A549 (cell line): ENCODE measurements at regions of chr4 and their contacts with region 1.

Region 1: GRCh38 chr4:38179690-38180377 is 219.6 kb downstream of the PTTG2 start:
- DNase-seq: peak in 1 of 2 experiments; percentile 55
- ATAC-seq: peak; percentile 74 to 89; a peak in 5 of 6 replicates
- H3K4me3 ChIP-seq: no peak overlapping the region
- H3K27ac ChIP-seq: peak overlapping the region in 1 of 2 experiments; percentile 76; a peak in 3 of 6 replicates
- H3K4me1 ChIP-seq: peaks cover 11% of the 10 kb centered on the region; the same call in 2 of the 3 replicates
- CTCF ChIP-seq: peak; percentile 92
- EP300 ChIP-seq: no peak
- POLR2A ChIP-seq: no peak
- RAD21 ChIP-seq: peak; percentile 96 to 97

Region 2: DNA sequence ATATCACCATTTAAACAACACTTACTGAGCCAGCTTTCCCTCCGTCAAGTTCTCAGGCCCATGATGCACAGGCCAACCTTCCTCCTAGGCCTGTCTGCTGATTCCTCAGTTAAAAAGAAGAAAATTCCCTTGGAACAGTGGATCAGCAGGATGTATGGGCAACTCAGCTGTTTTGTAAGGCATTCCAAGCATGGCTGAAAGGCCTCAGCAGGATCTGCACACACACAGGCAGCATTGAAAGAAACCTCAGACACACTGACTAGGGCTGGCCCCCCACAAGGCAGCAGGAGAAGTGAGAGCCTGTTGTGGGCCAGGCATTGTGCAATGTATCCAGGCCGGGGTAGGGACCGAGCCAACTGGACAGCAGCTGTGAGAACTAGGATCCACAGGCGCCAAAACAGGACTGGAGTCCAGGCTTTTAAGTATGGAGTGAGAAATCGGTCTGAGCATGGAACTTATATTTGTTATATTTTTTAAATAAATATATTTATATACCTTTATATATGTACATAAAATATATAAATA is 763.9 kb before region 1 on chr4:
- CTCF ChIA-PET with region 1: no interaction called
- POLR2A ChIA-PET with region 1: no interaction called
- DNase-seq: no peak
- ATAC-seq: no peak
- H3K4me3 ChIP-seq: no peak overlapping the region
- H3K27ac ChIP-seq: no peak overlapping the region
- H3K4me1 ChIP-seq: no peaks in the 10 kb centered on the region
- CTCF ChIP-seq: no peak
- EP300 ChIP-seq: no peak
- POLR2A ChIP-seq: no peak
- RAD21 ChIP-seq: no peak

Region 3: GRCh38 chr4:38160487-38161207 is 19.2 kb before region 1 on chr4:
- CTCF ChIA-PET with region 1: interaction called, 15 read pairs
- POLR2A ChIA-PET with region 1: no interaction called
- DNase-seq: peak; percentile 60 to 86
- ATAC-seq: peak; percentile 77 to 80
- H3K4me3 ChIP-seq: no peak overlapping the region
- H3K27ac ChIP-seq: peak overlapping the region; percentile 83 to 90
- H3K4me1 ChIP-seq: peaks cover 60% of the 10 kb centered on the region
- CTCF ChIP-seq: no peak
- EP300 ChIP-seq: peak in 1 of 2 experiments; percentile 42; a peak in 1 of 5 replicates
- POLR2A ChIP-seq: no peak
- RAD21 ChIP-seq: no peak

Region 4: GRCh38 chr4:38195911-38196310 is 16.1 kb after region 1 on chr4:
- CTCF ChIA-PET with region 1: interaction called, 15 read pairs
- POLR2A ChIA-PET with region 1: no interaction called
- DNase-seq: no peak
- ATAC-seq: no peak
- H3K4me3 ChIP-seq: no peak overlapping the region
- H3K27ac ChIP-seq: no peak overlapping the region
- H3K4me1 ChIP-seq: peaks cover 1% of the 10 kb centered on the region; the same call in 2 of the 3 replicates
- CTCF ChIP-seq: no peak
- EP300 ChIP-seq: no peak
- POLR2A ChIP-seq: no peak
- RAD21 ChIP-seq: no peak

Region 5: DNA sequence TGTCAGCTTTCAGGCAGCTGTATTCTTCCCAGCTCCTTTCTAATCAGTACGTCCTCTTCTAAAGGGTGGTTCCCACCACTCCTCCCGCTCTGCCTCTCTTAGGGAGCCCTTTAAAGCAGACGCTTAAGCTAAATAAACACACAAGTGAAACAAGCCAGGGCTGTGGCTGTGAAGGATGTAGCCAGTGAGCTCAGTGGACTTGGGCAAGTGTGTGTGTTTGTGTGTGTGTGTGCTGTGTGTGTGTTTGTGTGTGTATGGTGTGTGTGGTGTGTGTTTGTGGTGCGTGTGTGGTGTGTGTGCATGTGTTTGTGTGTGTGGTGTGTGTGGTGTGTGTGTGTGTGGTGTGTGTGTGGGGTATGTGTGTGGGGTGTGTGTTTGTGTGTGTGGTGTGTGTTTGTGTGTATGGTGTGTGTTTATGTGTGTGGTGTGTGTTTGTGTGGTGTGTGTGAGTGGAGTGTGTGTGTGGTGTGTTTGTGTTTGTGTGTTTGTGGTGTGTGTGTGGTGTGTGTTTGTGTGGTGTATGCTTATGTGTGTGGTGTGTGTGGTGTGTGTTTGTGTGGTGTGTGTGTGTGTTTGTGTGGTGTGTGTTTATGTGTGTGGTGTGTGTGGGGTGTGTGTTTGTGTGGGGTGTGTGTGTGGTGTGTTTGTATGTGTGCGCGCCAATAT is 63.7 kb after region 1 on chr4:
- CTCF ChIA-PET with region 1: no interaction called
- POLR2A ChIA-PET with region 1: no interaction called
- DNase-seq: no peak
- ATAC-seq: no peak
- H3K4me3 ChIP-seq: no peak overlapping the region
- H3K27ac ChIP-seq: no peak overlapping the region
- H3K4me1 ChIP-seq: no peaks in the 10 kb centered on the region
- CTCF ChIP-seq: no peak
- EP300 ChIP-seq: no peak
- POLR2A ChIP-seq: no peak
- RAD21 ChIP-seq: no peak

Region 6: GRCh38 chr4:38675146-38676121 is 495.6 kb after region 1 on chr4:
- CTCF ChIA-PET with region 1: interaction called, 46 read pairs
- POLR2A ChIA-PET with region 1: no interaction called
- DNase-seq: peak; percentile 36 to 73
- ATAC-seq: peak; percentile 57 to 66; a peak in 5 of 6 replicates
- H3K4me3 ChIP-seq: peak overlapping the region; percentile 2; the same call in 1 of the 3 replicates
- H3K27ac ChIP-seq: peak overlapping the region; percentile 77 to 91
- H3K4me1 ChIP-seq: peaks cover 58% of the 10 kb centered on the region
- CTCF ChIP-seq: peak; percentile 84
- EP300 ChIP-seq: no peak
- POLR2A ChIP-seq: no peak
- RAD21 ChIP-seq: peak; percentile 88 to 91

Region 7: GRCh38 chr4:38743866-38744265 is 564.0 kb after region 1 on chr4:
- CTCF ChIA-PET with region 1: interaction called, 12 read pairs
- POLR2A ChIA-PET with region 1: no interaction called
- DNase-seq: no peak
- ATAC-seq: no peak
- H3K4me3 ChIP-seq: no peak overlapping the region
- H3K27ac ChIP-seq: no peak overlapping the region
- H3K4me1 ChIP-seq: no peaks in the 10 kb centered on the region
- CTCF ChIP-seq: no peak
- EP300 ChIP-seq: no peak
- POLR2A ChIP-seq: no peak
- RAD21 ChIP-seq: no peak